Aorta (tissue), 5 donors: ENCODE measurements at regions of chr12 and their contacts with region 1.

Region 1: GRCh38 chr12:70733385-70733784 is 96.2 kb upstream of the PTPRB start:
- DNase-seq: no peak
- ATAC-seq: peak; percentile 85
- H3K4me3 ChIP-seq: no peak overlapping the region
- H3K27ac ChIP-seq: no peak overlapping the region
- H3K4me1 ChIP-seq: no peaks in the 10 kb centered on the region
- H3K27me3 ChIP-seq: no peaks in the 10 kb centered on the region

Region 2: DNA sequence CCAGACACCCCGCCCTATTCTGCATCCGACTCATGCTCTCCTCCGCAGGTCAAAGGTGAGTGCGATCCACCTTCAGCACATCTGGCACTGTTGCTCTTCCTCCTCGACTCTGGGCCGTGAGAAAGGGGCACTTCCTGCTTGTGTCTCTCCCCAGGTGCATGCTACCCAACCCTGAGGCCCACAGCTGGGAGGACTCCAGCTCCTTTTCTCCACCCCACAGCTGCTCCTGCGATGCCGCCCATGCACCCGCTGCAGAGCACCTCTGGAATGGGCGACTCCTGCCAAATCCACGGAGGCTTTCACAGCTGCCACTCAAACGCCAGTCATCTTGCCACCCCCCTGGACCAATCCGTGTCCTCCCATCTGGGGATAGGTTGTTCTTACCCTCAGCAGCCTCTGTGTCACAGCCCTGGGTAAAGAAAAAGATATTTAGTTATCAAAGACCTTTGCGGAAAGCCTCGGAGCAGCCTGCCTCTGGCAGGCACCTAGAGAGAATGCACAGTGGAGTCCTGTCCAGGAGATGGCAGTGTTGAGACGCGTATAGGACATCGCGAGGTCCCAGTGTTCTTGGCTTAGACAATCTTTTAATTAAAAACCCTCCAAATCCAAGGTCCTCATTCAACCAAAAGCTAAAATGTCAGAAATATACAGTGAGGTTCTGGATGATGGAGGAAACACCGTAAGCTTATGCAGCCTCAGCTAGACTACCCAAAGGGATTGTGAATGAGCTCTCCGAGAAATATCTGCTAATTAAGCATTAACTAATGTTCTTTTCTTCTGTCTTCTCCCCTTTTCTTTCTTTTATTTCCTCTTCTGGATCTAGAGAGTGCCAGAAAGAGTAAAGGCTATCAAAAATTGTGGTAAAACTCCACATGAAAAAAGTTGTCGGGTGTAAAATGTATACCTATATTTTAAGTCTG is 854.1 kb before region 1 on chr12:
- intact Hi-C with region 1: loop called (anchors 5 kb)
- DNase-seq: peak; percentile 74 to 80
- ATAC-seq: peak; percentile 94
- H3K4me3 ChIP-seq: no peak overlapping the region
- H3K27ac ChIP-seq: no peak overlapping the region
- H3K4me1 ChIP-seq: no peaks in the 10 kb centered on the region
- H3K27me3 ChIP-seq: no peaks in the 10 kb centered on the region

Region 3: DNA sequence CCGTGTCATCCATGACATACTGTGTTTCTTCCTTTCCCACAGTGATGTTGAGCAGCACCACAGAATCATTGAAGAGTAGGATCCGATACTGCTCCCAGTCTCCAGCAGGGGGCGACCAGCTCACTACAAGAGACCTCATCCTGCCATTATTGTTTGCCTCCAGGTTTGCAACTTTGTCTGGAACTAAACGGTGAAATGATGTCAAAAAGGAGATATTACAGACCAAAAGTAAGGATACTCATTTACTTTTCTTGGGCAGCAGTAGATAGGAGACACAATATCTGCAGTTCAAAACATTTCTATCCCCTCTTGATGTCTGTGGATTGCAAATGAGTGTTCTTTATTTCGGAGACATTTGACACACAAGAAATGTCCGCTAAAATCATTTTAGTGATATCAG is 143.3 kb before region 1 on chr12:
- intact Hi-C with region 1: loop called in 1 of 2 experiments (anchors 5 kb)
- DNase-seq: peak; percentile 73 to 89
- ATAC-seq: peak; percentile 87
- H3K4me3 ChIP-seq: no peak overlapping the region
- H3K27ac ChIP-seq: no peak overlapping the region
- H3K4me1 ChIP-seq: no peaks in the 10 kb centered on the region
- H3K27me3 ChIP-seq: no peaks in the 10 kb centered on the region

Region 4: DNA sequence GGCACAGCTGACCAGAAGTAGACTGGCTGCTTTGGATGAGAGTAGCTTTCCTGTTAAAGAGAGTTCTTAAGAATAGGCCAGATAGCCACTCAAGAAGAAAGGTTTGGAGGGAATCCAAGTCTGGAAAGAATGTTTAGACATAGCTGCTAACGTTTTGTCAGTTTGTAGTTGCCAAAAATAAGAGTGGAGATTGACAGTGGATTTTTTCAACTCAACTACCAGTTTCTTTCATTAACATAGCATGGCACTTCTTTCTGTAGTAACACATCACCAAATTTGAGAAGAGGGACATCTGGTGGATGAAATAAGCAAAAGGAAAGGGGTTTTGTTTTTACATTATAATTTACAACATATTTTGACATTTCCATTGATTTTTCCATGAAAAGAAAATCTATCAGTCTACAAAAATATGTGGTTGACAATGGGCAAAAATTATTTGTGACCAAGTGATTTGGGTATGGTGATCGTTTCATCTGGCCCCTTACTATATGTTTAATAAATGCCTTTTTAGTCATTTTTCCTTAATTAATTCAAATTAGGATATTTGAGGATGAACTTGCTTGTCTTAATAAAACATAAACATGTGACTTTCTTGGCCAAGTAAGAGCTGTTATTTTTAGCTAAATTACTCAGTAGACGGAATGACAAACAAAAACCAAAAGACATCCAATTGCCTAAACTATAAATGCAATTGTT is 116.0 kb after region 1 on chr12:
- intact Hi-C with region 1: loop called (anchors 2 to 5 kb)
- DNase-seq: no peak
- ATAC-seq: no peak
- H3K4me3 ChIP-seq: no peak overlapping the region
- H3K27ac ChIP-seq: no peak overlapping the region
- H3K4me1 ChIP-seq: peaks cover 0 to 12% of the 10 kb centered on the region in 2 donors
- H3K27me3 ChIP-seq: no peaks in the 10 kb centered on the region